Right cardiac atrium (tissue), 5 donors: ENCODE measurements at regions of chr1 and their contacts with region 1.

Region 1: DNA sequence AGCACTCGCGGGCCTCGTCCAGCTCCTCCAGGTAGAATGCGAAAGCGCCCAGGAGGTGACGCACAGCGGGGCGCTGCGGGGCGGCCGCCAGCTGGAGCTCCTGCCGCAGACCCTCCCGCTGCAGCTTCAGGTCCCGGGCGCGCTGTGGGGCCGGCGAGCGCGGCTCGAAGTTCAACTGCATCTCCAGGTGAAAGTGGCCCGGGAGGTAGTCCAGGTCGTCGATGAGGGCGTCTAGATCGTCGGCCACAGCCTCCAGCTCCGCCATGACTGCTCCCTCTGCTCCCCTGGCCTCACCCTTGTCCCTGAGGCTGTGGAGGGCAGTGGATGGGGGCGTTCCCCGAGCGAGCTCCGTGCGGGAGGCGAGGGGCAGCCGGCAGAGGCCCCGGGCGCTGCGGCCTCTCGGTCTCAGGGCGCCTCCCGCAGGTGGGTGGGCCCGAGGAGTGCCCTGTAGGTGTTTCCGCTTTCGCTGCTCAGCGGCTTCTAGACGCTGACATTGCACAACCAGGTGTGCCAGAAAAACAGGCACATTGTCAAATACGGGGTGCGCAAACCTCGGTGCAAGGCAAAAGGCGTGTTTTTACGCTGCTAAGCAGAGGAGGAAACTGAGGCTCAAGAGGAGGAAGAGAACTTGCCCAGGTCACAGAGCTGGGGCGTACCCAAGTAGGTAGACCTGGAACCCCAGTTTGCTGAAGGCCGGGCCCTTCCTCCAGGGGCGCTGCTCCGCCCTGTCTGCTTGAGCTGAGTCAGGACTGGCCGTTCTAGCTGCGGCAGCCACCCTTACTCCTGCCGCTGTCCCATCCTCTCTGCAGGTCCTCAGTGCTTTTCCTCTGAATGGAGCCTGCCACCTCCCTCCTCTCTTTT is at the start of gene TTC22:
- DNase-seq: peak in 1 of 3 donors; percentile 77
- ATAC-seq: peak; percentile 41 to 55
- H3K4me3 ChIP-seq: peak within 1 kb of the TSS; percentile 26
- H3K27ac ChIP-seq: no peak within 1 kb of the TSS
- H3K4me1 ChIP-seq: no peaks in the 10 kb centered on the region
- H3K27me3 ChIP-seq: no peaks in the 10 kb centered on the region
- total RNA-seq, gene TTC22: 0.06 to 0.17 (median 0.09) TPM in 3 of 4 donors, not detected in the other

Region 2: GRCh38 chr1:53878492-53879105 is 922.5 kb before region 1 on chr1:
- intact Hi-C with region 1: loop called in 1 of 4 experiments (anchors 10 kb)
- DNase-seq: no peak
- ATAC-seq: no peak
- H3K4me3 ChIP-seq: no peak overlapping the region
- H3K27ac ChIP-seq: no peak overlapping the region
- H3K4me1 ChIP-seq: no peaks in the 10 kb centered on the region
- H3K27me3 ChIP-seq: no peaks in the 10 kb centered on the region

Region 3: DNA sequence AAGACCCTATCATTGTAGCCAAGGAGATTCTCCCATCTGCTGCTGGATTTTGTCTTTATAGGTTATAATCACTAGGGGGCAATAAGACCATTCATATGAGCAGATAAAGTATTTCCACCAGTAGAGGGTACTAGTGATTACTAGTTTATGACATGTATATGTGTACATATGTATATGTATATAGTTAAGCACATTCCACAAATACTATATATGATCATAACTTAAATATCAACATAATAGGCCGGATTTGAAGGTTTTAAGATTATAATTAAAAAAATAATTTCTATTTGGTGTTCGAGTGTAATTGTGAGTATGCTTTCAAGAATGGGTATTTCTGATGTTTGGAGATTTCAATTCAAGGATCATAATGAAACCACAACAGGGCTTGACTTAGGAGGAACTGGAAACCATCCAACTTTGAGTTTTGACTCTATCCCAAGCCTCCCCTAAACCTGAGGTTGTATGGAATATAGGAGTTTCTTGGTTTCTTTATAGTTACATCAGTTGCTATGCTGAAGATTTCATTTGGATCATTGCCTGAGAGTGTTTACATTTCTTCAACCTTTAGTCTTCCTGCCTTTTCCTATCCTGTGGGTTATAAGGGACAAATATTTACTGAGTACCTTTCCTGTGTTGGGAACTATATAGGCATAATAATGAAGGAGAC is 730.8 kb before region 1 on chr1:
- intact Hi-C with region 1: loop called in 1 of 4 experiments (anchors 10 kb)
- DNase-seq: no peak
- ATAC-seq: peak in 1 of 2 donors; percentile 49
- H3K4me3 ChIP-seq: no peak overlapping the region
- H3K27ac ChIP-seq: no peak overlapping the region
- H3K4me1 ChIP-seq: no peaks in the 10 kb centered on the region
- H3K27me3 ChIP-seq: no peaks in the 10 kb centered on the region

Region 4: DNA sequence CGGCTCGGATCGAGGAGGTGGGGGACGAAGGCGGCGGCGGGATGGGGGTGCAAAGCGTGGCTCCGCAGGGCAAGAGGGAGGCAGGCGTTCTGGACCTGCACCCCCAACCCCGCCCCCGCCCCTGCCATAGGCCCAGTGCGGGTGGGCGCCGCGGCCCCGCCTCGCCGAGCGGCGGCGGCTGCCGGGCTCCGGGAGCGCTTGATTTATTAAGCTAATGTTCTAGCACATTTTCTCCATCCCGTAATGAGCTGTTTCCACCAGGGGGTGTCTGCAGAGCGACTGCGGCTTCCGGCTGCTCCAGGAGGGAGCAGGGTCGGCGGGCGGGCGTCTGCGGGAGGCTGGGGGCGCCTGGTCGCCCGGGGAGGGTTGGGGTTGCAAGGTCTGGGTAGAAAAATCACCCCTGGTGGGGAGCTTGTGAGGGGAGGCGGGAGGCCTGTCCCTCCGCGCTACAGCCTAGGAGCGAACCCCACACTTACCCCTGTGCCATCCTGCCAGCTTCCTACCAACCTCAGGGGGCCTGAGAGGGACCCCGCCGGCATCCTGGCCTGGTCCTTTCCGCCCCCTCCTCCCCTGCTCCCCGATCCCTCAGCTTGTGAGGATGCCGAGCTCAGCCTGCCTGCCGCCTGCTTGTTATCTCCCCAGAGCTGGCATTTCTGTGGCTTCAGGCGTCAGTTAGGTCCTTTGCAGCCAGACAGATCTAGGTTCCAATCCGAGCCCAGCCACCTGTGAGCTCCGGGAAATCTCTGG is 301.6 kb before region 1 on chr1:
- intact Hi-C with region 1: loop called in 2 of 4 experiments (anchors 10 kb)
- DNase-seq: peak; percentile 27 to 67 (median 64)
- ATAC-seq: peak; percentile 69 to 71
- H3K4me3 ChIP-seq: peak overlapping the region; percentile 36
- H3K27ac ChIP-seq: no peak overlapping the region
- H3K4me1 ChIP-seq: no peaks in the 10 kb centered on the region
- H3K27me3 ChIP-seq: no peaks in the 10 kb centered on the region